PC-9 (cell line): ENCODE measurements at regions of chr10 and their contacts with region 1.

Region 1: DNA sequence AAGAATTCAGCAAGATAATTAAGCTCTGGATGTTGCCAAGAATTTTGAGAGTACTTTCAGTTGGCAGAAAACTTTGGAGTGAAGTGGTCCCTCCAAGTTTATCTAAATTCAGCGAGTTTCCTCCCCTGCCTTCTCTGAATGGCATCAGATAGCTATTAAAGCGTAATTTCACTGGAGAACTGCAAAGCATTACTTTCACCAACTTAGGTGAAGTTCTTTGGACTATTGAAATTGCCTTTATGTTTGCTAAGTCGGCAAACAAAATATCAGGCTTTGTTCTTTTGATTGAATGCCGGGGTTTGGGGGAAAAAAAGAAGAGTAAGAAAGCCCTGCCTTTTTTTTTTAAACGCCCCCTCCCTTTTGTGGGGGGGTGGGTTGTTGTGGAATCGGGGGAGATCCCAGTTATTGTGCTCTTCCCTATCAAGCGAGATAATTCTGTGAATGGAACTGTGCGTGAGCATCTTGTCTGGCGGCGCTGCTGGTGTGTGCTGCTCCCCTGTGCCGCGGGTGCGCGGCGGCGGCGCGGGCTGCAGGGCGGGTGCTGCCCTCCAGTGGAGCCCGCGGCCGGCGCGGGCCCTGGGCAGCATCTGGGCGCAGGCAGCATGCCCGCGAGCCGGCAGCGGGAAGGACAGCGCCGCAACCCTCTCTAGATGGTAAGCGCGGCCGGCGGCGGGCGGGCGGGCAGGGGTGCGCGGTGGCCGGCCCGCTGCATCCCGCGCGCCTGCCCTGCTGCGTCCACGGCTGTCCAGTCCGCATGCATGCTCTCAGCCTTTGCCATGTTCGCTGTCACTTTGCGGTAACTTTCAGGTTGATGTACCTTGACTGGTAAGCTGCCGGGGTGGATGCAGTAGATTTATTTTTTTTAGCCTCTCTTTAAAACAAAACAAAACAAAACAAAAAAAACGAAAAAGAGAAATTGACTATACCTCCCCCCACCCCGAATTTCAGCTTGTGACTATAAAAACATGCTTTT is 176.5 kb downstream of the TCF7L2 start:
- DNase-seq: peak in 1 of 2 experiments; percentile 63
- H3K4me3 ChIP-seq: peak overlapping the region; percentile 51; the same call in 1 of the 2 replicates
- H3K27ac ChIP-seq: no peak overlapping the region
- H3K4me1 ChIP-seq: peaks cover 19% of the 10 kb centered on the region
- H3K27me3 ChIP-seq: no peaks in the 10 kb centered on the region
- CTCF ChIP-seq: peak; percentile 42; the same call in 1 of the 2 replicates

Region 2: GRCh38 chr10:112471878-112472487 is 654.5 kb before region 1 on chr10:
- CTCF ChIA-PET with region 1: no interaction called
- POLR2A ChIA-PET with region 1: no interaction called
- intact Hi-C with region 1: loop called (anchors 5 kb)
- DNase-seq: peak in 1 of 2 experiments; percentile 45
- H3K4me3 ChIP-seq: no peak overlapping the region
- H3K27ac ChIP-seq: no peak overlapping the region
- H3K4me1 ChIP-seq: no peaks in the 10 kb centered on the region
- H3K27me3 ChIP-seq: no peaks in the 10 kb centered on the region
- CTCF ChIP-seq: peak; percentile 68

Region 3: GRCh38 chr10:112565434-112566053 is 561.0 kb before region 1 on chr10:
- CTCF ChIA-PET with region 1: no interaction called
- POLR2A ChIA-PET with region 1: no interaction called
- intact Hi-C with region 1: loop called (anchors 1 kb)
- DNase-seq: peak; percentile 20 to 56
- H3K4me3 ChIP-seq: no peak overlapping the region
- H3K27ac ChIP-seq: no peak overlapping the region
- H3K4me1 ChIP-seq: no peaks in the 10 kb centered on the region
- H3K27me3 ChIP-seq: no peaks in the 10 kb centered on the region
- CTCF ChIP-seq: peak; percentile 73

Region 4: DNA sequence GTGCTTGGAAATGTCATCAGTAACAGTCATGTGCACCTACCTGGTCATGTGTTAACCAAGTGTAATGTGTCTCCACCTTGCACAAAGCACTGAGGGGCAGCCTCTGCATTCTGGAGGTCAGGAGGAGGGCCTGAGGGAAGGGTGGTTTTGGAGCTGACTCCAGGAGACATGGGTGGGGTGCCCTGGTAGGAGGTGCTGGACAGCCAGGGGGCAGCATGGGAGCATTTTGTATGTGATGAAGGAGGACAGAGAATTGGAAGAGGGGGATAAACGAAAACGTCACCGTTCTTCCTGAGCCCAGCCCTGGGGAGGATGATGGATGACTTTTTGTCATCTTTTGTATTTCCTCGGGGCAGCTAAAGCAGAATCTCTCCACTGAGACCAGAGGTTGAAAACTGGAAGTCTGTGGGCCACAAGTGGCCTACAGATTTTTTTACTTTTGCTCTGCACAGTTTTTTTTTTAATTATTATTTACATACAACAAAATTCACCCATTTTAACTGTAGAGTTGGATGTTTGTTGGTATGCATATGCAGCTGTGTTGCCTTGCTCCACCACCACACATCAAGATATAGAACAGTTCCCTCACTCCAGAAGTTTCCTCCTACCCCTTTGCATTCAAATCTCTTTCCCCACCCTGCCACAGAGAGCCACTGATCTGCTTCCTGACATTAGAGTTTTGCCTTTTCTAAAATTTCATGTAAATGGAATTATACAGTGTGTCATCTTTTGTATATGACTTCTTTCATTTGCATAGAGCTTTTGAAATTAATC is 437.0 kb before region 1 on chr10:
- CTCF ChIA-PET with region 1: no interaction called
- POLR2A ChIA-PET with region 1: no interaction called
- intact Hi-C with region 1: loop called (anchors 10 kb)
- DNase-seq: peak in 1 of 2 experiments; percentile 14
- H3K4me3 ChIP-seq: no peak overlapping the region
- H3K27ac ChIP-seq: no peak overlapping the region
- H3K4me1 ChIP-seq: no peaks in the 10 kb centered on the region
- H3K27me3 ChIP-seq: no peaks in the 10 kb centered on the region
- CTCF ChIP-seq: no peak

Region 5: DNA sequence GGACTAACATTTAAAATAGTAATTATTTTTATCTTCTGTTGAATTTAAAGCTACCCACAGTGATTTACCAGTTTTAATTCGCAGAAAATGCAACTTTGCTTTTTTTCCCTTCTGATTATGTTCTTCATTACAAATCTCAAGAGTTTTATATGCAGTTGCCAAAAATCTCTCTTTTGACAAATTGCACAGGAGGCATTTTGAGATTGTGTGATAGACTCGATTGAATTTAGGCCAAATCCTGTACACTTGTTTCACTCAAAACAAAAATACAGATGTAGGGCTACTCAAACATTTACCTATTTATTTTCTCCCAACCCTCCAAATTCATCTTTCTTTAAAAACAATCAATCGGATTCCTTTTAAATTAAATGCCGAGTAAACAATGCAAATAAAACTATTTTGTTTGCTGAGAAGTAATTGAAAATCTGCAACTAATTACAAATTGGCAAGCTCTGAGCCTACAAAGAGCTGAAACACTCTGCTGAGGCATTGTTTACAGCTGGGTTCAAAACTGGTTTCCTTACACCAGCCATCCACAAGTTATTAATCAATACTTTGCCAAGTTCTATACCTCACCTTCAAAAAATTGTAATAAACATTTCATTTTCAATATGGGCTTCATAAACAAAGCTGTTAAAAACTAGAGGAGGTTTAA is 391.3 kb before region 1 on chr10:
- CTCF ChIA-PET with region 1: interaction called, 10 read pairs
- POLR2A ChIA-PET with region 1: no interaction called
- intact Hi-C with region 1: no loop called
- DNase-seq: no peak
- H3K4me3 ChIP-seq: no peak overlapping the region
- H3K27ac ChIP-seq: no peak overlapping the region
- H3K4me1 ChIP-seq: peaks cover 9% of the 10 kb centered on the region; the same call in 1 of the 2 replicates
- H3K27me3 ChIP-seq: no peaks in the 10 kb centered on the region
- CTCF ChIP-seq: no peak